ENCODE measurements at regions of chr12 and their contacts with region 1.

Region 1: DNA sequence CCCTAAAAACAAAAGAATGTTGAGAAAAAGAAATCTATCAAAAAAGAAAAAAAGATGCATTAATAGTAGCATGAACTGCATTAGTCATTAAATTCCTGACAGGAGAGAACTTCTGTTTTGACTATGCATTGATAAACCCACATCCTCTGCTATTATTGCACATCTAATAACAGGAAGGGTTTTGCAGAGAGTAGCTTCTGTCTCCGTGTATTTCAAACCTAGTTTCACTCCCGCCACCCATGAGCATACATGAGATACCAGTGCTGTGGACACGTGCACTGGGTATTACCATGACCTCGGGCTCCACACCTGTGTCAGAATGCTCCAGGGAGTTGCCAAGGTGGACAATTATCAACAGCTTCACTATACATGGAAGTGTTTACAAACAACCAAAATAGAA is 449.1 kb upstream of the SOX5 start:
- DNase-seq: no peak
- ATAC-seq: no peak

Region 2: GRCh38 chr12:24561882-24562760 is 163.5 kb after region 1 on chr12:
- intact Hi-C with region 1: loop called in 1 of 2 experiments (anchors 10 kb)
- DNase-seq: peak; percentile 76
- ATAC-seq: peak; percentile 81 to 89